ENCODE measurements at regions of chr2 and their contacts with region 1.

Region 1: DNA sequence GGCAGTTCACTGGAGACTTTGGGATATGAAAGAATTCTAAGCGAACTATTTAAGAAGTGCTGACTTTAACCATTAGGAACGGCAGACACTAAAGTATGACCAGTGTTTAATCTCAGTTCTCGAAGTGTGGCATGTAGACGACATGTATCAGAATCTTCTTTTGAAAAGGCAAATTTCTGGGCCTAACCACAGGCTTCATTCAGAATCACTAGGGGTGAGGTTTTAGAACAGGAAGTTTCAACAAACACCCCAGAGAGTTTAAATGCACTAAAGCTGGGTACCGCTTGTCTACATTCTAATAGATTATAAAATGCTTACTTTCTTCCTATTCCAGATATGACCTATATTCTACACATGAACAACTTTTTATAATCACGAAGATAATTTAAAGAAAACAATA is 180.3 kb downstream of the ANKRD44 start:
- DNase-seq: peak in 7 of 9 donors; percentile 38 to 64 (median 50)
- ATAC-seq: peak; percentile 92
- H3K4me3 ChIP-seq: no peak overlapping the region
- H3K4me3 Mint-ChIP-seq: peak overlapping the region; percentile 6 to 67 (median 45)
- H3K27ac ChIP-seq: peak overlapping the region; percentile 46
- H3K27ac Mint-ChIP-seq: peak overlapping the region; percentile 32 to 95 (median 71)
- H3K4me1 ChIP-seq: peaks cover 42 to 51% of the 10 kb centered on the region in 2 donors
- H3K4me1 Mint-ChIP-seq: peaks cover 60 to 95% (median 80%) of the 10 kb centered on the region in 7 donors
- H3K27me3 ChIP-seq: no peaks in the 10 kb centered on the region
- H3K27me3 Mint-ChIP-seq: no peaks in the 10 kb centered on the region

Region 2: GRCh38 chr2:197145471-197146138 is 15.3 kb after region 1 on chr2:
- CTCF ChIA-PET with region 1: interaction called, 3 read pairs
- POLR2A ChIA-PET with region 1: interaction called, 5 read pairs
- intact Hi-C with region 1: loop called (anchors 1 kb)
- DNase-seq: peak in 7 of 9 donors; percentile 46 to 74 (median 66)
- ATAC-seq: peak; percentile 95
- H3K4me3 ChIP-seq: peak overlapping the region; percentile 8
- H3K4me3 Mint-ChIP-seq: peak overlapping the region; percentile 0 to 71 (median 49)
- H3K27ac ChIP-seq: peak overlapping the region; percentile 62
- H3K27ac Mint-ChIP-seq: peak overlapping the region; percentile 73 to 98 (median 93)
- H3K4me1 ChIP-seq: peaks cover 56 to 77% of the 10 kb centered on the region in 2 donors
- H3K4me1 Mint-ChIP-seq: peaks cover 57 to 93% (median 84%) of the 10 kb centered on the region in 7 donors
- H3K27me3 ChIP-seq: no peaks in the 10 kb centered on the region
- H3K27me3 Mint-ChIP-seq: no peaks in the 10 kb centered on the region

Region 3: DNA sequence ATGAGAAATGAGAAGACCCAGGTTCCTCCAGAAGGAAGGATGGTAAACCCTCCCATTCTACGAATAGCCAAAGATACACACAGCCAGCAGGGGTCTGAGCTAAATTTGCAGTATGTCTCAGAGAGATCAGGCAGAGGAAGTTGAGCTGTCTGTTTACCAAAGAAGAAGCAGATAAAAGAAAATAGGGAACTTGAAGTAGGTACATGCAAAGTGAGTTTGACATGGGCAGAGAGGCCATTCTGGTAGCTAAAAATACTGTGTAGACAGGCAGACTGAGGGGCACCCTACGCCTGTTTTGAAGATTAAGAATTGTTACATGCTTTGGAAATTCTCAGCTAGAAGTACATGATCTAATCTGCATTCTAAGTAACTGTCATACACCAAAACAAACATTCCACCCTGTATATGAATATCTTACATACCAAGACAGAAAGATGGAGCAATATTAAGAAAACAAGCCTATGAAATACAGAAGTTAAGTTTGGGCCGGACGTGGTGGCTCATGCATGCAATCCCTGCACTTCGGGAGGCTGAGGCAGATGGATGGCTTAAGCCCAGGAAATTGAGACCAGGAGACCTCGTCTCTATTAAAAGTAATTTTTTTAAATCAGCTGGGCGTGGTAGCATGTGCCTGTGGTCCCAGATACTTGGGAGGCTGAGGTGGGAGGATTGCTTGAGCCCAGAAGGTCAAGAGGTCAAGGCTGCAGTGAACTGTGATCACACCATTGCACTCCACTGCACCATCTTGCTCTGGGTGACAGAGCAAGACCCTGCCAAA is 22.3 kb after region 1 on chr2:
- CTCF ChIA-PET with region 1: interaction called, 4 read pairs
- POLR2A ChIA-PET with region 1: interaction called, 5 read pairs
- intact Hi-C with region 1: loop called in 1 of 2 experiments (anchors 2 kb)
- DNase-seq: peak in 7 of 9 donors; percentile 53 to 66 (median 59)
- ATAC-seq: peak; percentile 93
- H3K4me3 ChIP-seq: peak overlapping the region; percentile 10
- H3K4me3 Mint-ChIP-seq: peak overlapping the region; percentile 56 to 83 (median 78)
- H3K27ac ChIP-seq: peak overlapping the region; percentile 57
- H3K27ac Mint-ChIP-seq: peak overlapping the region; percentile 68 to 98 (median 92)
- H3K4me1 ChIP-seq: peaks cover 37 to 59% of the 10 kb centered on the region in 2 donors
- H3K4me1 Mint-ChIP-seq: peaks cover 65 to 92% (median 85%) of the 10 kb centered on the region in 7 donors
- H3K27me3 ChIP-seq: no peaks in the 10 kb centered on the region
- H3K27me3 Mint-ChIP-seq: no peaks in the 10 kb centered on the region

Measured in naive thymus-derived CD4-positive, alpha-beta T cell (primary cell).